Posterior vena cava (tissue), 2 donors: ENCODE measurements at regions of chr18 and their contacts with region 1.

Region 1: GRCh38 chr18:2723207-2723606 is 67.7 kb downstream of the SMCHD1 start:
- DNase-seq: no peak

Region 2: GRCh38 chr18:2606335-2606734 is 116.9 kb before region 1 on chr18:
- intact Hi-C with region 1: no loop called
- DNase-seq: no peak

Region 3: GRCh38 chr18:2687390-2688001 is 35.7 kb before region 1 on chr18:
- intact Hi-C with region 1: loop called in 1 of 2 experiments (anchors 1 kb)
- DNase-seq: no peak

Region 4: DNA sequence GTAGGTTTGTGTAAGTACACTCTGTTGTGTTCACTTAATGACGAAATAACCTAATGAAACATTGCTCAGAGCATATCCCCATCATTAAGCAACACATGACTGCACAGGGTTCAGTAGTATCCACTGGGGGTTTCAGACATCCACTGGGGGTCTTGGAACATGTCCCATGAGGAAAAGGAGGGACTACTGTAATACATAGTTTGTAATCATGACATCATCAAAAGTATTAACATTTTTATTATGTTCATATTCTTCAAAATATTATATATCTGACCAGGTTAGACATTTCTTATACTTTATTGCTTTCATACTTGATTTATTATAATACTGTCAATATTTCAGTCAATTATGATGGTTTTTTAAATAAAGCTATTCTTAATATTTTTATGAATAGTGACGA is 69.2 kb after region 1 on chr18:
- intact Hi-C with region 1: loop called in 1 of 2 experiments (anchors 2 kb)
- DNase-seq: no peak